ENCODE measurements at regions of chr16 and their contacts with region 1.

Region 1: GRCh38 chr16:82728901-82729300 is 102.1 kb downstream of the CDH13 start:
- DNase-seq: no peak
- ATAC-seq: no peak
- H3K4me3 ChIP-seq: no peak overlapping the region
- H3K4me3 Mint-ChIP-seq: no peak overlapping the region
- H3K27ac ChIP-seq: no peak overlapping the region
- H3K27ac Mint-ChIP-seq: no peak overlapping the region
- H3K4me1 ChIP-seq: no peaks in the 10 kb centered on the region
- H3K4me1 Mint-ChIP-seq: no peaks in the 10 kb centered on the region
- H3K27me3 ChIP-seq: no peaks in the 10 kb centered on the region
- H3K27me3 Mint-ChIP-seq: peaks cover 2 to 5% of the 10 kb centered on the region in 2 donors

Region 2: GRCh38 chr16:82400046-82400445 is 328.9 kb before region 1 on chr16:
- CTCF ChIA-PET with region 1: no interaction called
- POLR2A ChIA-PET with region 1: no interaction called
- DNase-seq: no peak
- ATAC-seq: no peak
- H3K4me3 ChIP-seq: no peak overlapping the region
- H3K4me3 Mint-ChIP-seq: no peak overlapping the region
- H3K27ac ChIP-seq: no peak overlapping the region
- H3K27ac Mint-ChIP-seq: no peak overlapping the region
- H3K4me1 ChIP-seq: peaks cover 0 to 8% of the 10 kb centered on the region in 2 experiments
- H3K4me1 Mint-ChIP-seq: no peaks in the 10 kb centered on the region
- H3K27me3 ChIP-seq: no peaks in the 10 kb centered on the region
- H3K27me3 Mint-ChIP-seq: peaks cover 13 to 17% of the 10 kb centered on the region in 2 donors

Region 3: GRCh38 chr16:82715160-82715559 is 13.7 kb before region 1 on chr16:
- CTCF ChIA-PET with region 1: interaction called in 1 of 2 experiments, 5 read pairs
- POLR2A ChIA-PET with region 1: interaction called in 1 of 2 experiments, 13 read pairs
- DNase-seq: no peak
- ATAC-seq: no peak
- H3K4me3 ChIP-seq: no peak overlapping the region
- H3K4me3 Mint-ChIP-seq: no peak overlapping the region
- H3K27ac ChIP-seq: no peak overlapping the region
- H3K27ac Mint-ChIP-seq: no peak overlapping the region
- H3K4me1 ChIP-seq: no peaks in the 10 kb centered on the region
- H3K4me1 Mint-ChIP-seq: no peaks in the 10 kb centered on the region
- H3K27me3 ChIP-seq: no peaks in the 10 kb centered on the region
- H3K27me3 Mint-ChIP-seq: no peaks in the 10 kb centered on the region

Region 4: DNA sequence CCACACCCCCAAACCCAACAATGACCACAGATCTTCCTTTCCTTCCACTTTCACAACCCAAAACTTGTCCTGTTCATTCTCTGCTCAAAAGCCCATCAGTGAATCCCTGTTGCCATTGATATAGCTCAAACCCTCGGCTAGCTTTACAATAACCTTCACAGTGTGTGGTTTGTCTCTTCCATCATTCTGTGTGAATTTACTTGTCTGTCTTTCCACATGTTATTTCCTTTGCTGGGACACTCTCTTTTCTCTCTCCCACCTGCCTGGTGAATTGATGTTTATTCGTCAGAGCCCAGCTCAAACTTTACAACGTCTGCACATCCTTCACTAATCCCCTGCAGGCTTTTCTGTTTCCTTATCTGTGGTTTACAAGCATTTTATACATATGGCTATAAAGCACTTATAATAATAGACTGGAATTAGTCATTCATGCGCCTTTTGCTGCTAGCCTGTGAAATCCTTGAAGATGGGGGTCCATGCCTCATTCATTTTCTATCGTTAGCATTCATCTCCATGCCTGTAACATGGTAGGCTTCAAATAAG is 12.2 kb after region 1 on chr16:
- CTCF ChIA-PET with region 1: no interaction called
- POLR2A ChIA-PET with region 1: no interaction called
- DNase-seq: no peak
- ATAC-seq: no peak
- H3K4me3 ChIP-seq: no peak overlapping the region
- H3K4me3 Mint-ChIP-seq: no peak overlapping the region
- H3K27ac ChIP-seq: no peak overlapping the region
- H3K27ac Mint-ChIP-seq: no peak overlapping the region
- H3K4me1 ChIP-seq: no peaks in the 10 kb centered on the region
- H3K4me1 Mint-ChIP-seq: no peaks in the 10 kb centered on the region
- H3K27me3 ChIP-seq: peaks cover 0 to 3% of the 10 kb centered on the region in 2 experiments
- H3K27me3 Mint-ChIP-seq: peaks cover 2 to 32% of the 10 kb centered on the region in 2 donors

Region 5: DNA sequence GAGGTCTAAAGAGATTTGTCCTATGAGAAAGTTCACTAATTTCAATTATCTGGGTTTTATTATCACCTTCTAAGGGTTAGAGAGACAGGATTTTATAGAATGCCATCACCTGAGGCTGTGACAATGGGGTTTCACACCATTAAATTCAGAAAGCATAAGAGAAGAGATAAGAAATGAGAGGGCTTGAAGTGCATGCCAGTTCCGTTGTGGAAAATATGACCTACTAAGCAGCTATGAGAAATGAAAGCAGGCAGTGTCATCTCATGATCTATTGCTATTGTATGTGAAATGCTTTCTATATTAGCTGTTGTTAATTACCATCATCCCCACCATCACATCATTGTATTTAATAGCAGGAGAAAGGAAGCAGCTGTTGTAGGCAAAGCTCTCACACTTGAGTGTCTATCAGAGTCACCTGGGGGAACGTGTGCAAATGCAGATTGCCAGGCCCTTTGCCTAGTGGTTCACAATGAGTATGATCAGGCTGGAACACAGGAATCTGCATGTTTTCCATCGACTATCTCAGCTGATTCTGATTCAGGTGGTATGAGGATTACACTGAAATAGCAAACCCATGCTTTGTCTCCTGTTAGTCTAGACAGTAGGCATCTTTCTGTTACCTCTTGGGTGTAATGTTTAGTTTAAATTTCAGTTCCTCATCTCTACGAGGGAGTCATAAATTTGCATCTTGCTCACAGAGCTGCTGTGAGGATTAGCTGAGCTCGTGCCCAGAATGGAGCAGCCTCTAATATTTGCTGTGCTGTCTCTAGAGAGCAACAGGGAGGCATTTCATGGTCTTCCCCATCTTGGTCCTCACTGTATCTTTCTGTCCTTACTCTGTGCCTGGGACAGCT is 154.3 kb after region 1 on chr16:
- CTCF ChIA-PET with region 1: no interaction called
- POLR2A ChIA-PET with region 1: no interaction called
- DNase-seq: no peak
- ATAC-seq: no peak
- H3K4me3 ChIP-seq: no peak overlapping the region
- H3K4me3 Mint-ChIP-seq: no peak overlapping the region
- H3K27ac ChIP-seq: no peak overlapping the region
- H3K27ac Mint-ChIP-seq: no peak overlapping the region
- H3K4me1 ChIP-seq: no peaks in the 10 kb centered on the region
- H3K4me1 Mint-ChIP-seq: no peaks in the 10 kb centered on the region
- H3K27me3 ChIP-seq: no peaks in the 10 kb centered on the region
- H3K27me3 Mint-ChIP-seq: peaks cover 0 to 7% of the 10 kb centered on the region in 2 donors